AG04449 (cell line): ENCODE measurements at regions of chr2 and their contacts with region 1.

Region 1: GRCh38 chr2:30293303-30293921 is 62.1 kb downstream of the LBH start:
- DNase-seq: peak; percentile 99
- H3K4me3 ChIP-seq: no peak overlapping the region
- CTCF ChIP-seq: no peak

Region 2: DNA sequence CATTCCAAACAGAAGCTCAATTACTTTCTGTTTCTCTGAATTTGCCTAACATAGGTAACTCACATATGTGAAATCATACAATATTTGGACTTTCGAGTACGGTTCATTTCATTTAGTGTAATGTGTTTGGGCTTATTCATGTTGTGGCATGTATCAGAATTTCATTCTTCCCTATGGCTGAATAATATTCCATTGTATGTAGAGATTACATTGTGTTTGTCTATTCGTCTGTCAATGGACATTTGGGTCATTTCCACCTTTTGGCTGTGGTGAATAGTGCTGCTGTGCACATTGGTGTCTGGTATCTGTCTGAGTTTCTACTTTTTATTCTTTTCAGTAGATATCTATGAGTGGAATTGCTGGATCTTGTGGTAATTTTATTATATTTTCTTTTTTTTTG is 18.2 kb before region 1 on chr2:
- CTCF ChIA-PET with region 1: no interaction called
- POLR2A ChIA-PET with region 1: interaction called, 10 read pairs
- DNase-seq: no peak
- H3K4me3 ChIP-seq: no peak overlapping the region
- CTCF ChIP-seq: no peak

Region 3: GRCh38 chr2:30311711-30312110 is 18.3 kb after region 1 on chr2:
- CTCF ChIA-PET with region 1: no interaction called
- POLR2A ChIA-PET with region 1: no interaction called
- DNase-seq: no peak
- H3K4me3 ChIP-seq: no peak overlapping the region
- CTCF ChIP-seq: no peak

Region 4: DNA sequence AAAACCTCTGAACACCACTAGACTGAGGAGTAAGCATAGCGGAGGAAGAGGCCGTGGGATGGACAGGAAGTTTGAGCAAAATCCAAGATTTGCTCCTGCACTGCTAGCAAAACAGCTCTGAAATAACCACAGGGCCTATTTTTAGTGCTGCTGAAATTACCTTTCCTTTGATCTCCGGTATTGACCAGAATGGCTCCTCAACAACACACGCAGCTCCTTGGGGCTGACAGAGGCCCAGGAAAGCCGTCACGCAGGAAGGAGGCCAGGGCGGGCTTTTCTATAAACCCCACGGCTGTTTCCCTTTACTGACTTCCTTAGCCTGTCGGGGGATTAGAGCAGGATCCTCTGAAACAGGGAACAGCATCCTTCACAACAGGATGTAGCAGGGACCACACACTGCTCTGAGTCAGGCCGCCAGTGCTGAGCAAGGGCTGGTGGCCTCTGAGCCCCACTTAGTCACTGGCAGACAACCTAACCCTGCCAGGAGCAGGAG is 72.8 kb after region 1 on chr2:
- CTCF ChIA-PET with region 1: no interaction called
- POLR2A ChIA-PET with region 1: interaction called, 16 read pairs
- DNase-seq: no peak
- H3K4me3 ChIP-seq: no peak overlapping the region
- CTCF ChIP-seq: no peak

Region 5: GRCh38 chr2:30421604-30422443 is 128.4 kb after region 1 on chr2:
- CTCF ChIA-PET with region 1: interaction called, 3 read pairs
- POLR2A ChIA-PET with region 1: interaction called, 12 read pairs
- DNase-seq: peak; percentile 75
- H3K4me3 ChIP-seq: peak overlapping the region; percentile 40
- CTCF ChIP-seq: no peak